Naive thymus-derived CD4-positive, alpha-beta T cell (primary cell): ENCODE measurements at regions of chr2 and their contacts with region 1.

Region 1: GRCh38 chr2:71000780-71001591 is 6.3 kb upstream of the TEX261 start:
- DNase-seq: peak; percentile 65 to 82 (median 76)
- ATAC-seq: peak; percentile 98
- H3K4me3 ChIP-seq: peak overlapping the region; percentile 66
- H3K4me3 Mint-ChIP-seq: peak overlapping the region; percentile 44 to 78 (median 64)
- H3K27ac ChIP-seq: peak overlapping the region; percentile 52
- H3K27ac Mint-ChIP-seq: peak overlapping the region in 8 of 9 donors; percentile 36 to 77 (median 60)
- H3K4me1 ChIP-seq: peaks cover 6 to 10% of the 10 kb centered on the region in 2 donors
- H3K4me1 Mint-ChIP-seq: peaks cover 6 to 29% (median 12%) of the 10 kb centered on the region in 7 donors
- H3K27me3 ChIP-seq: no peaks in the 10 kb centered on the region
- H3K27me3 Mint-ChIP-seq: peaks cover 0 to 6% (median 3%) of the 10 kb centered on the region in 5 donors

Region 2: GRCh38 chr2:70984576-70985282 is 16.3 kb before region 1 on chr2:
- CTCF ChIA-PET with region 1: interaction called, 24 read pairs
- POLR2A ChIA-PET with region 1: interaction called, 4 read pairs
- intact Hi-C with region 1: loop called (anchors 1 kb)
- DNase-seq: peak; percentile 71 to 86 (median 82)
- ATAC-seq: peak; percentile 100
- H3K4me3 ChIP-seq: no peak overlapping the region
- H3K4me3 Mint-ChIP-seq: peak overlapping the region in 8 of 10 donors; percentile 51 to 66 (median 57)
- H3K27ac ChIP-seq: peak overlapping the region; percentile 8
- H3K27ac Mint-ChIP-seq: peak overlapping the region in 6 of 9 donors; percentile 39 to 76 (median 45)
- H3K4me1 ChIP-seq: no peaks in the 10 kb centered on the region
- H3K4me1 Mint-ChIP-seq: peaks cover 7 to 22% (median 18%) of the 10 kb centered on the region in 7 donors
- H3K27me3 ChIP-seq: no peaks in the 10 kb centered on the region
- H3K27me3 Mint-ChIP-seq: no peaks in the 10 kb centered on the region